ENCODE measurements at regions of chr17 and their contacts with region 1.

Region 1: DNA sequence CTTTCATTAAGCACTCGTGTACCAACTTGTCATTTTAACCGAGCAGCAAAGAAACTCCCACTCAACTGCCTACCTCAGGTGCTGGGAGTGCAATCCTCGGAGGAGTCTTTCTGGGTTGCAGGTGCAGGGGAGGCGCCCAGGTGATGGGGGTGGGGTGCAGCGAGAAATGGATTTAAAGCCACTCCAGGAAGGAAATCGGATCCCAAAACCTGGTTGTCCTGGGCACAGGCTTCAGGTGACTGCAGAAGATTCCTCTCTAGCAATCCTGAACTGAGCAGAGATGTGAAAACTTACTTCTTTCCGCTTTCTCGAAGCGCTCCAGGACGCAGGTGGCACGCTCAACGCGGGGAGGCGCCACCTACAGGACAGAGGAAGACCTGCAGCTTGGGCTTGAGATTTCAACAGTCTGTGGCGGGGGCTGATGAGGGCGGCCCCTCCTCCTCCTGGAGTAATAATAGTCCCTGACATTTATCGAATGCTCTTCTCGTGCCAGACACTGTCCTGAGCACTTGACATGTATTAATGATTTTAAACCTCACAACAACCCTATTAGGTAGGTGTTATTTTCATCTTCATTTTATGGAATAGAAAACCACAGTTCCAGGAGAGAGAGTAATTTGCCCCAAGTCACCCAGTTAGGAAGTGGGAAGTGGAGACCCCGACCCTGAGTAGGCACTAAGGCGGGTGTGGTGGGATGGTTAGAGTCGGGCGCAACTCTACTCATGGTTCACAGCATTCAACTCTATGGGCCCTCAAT is 27.2 kb upstream of the SKAP1 start:
- DNase-seq: peak; percentile 89
- ATAC-seq: peak; percentile 96
- H3K4me3 ChIP-seq: peak overlapping the region in 1 of 5 experiments; percentile 20
- H3K4me3 Mint-ChIP-seq: peak overlapping the region; percentile 17
- H3K27ac ChIP-seq: no peak overlapping the region
- H3K27ac Mint-ChIP-seq: peak overlapping the region; percentile 15
- H3K4me1 ChIP-seq: peaks cover 35 to 41% of the 10 kb centered on the region in 2 donors
- H3K4me1 Mint-ChIP-seq: peaks cover 39% of the 10 kb centered on the region
- H3K27me3 ChIP-seq: peaks cover 0 to 8% (median 0%) of the 10 kb centered on the region in 4 experiments
- H3K27me3 Mint-ChIP-seq: peaks cover 8% of the 10 kb centered on the region
- CTCF ChIP-seq: peak; percentile 98

Region 2: GRCh38 chr17:48335858-48336500 is 121.3 kb before region 1 on chr17:
- CTCF ChIA-PET with region 1: interaction called, 17 read pairs
- POLR2A ChIA-PET with region 1: no interaction called
- intact Hi-C with region 1: loop called (anchors 1 kb)
- DNase-seq: peak; percentile 79
- ATAC-seq: peak; percentile 47
- H3K4me3 ChIP-seq: no peak overlapping the region
- H3K4me3 Mint-ChIP-seq: no peak overlapping the region
- H3K27ac ChIP-seq: no peak overlapping the region
- H3K27ac Mint-ChIP-seq: no peak overlapping the region
- H3K4me1 ChIP-seq: no peaks in the 10 kb centered on the region
- H3K4me1 Mint-ChIP-seq: no peaks in the 10 kb centered on the region
- H3K27me3 ChIP-seq: no peaks in the 10 kb centered on the region
- H3K27me3 Mint-ChIP-seq: peaks cover 4% of the 10 kb centered on the region
- CTCF ChIP-seq: peak; percentile 91

Region 3: DNA sequence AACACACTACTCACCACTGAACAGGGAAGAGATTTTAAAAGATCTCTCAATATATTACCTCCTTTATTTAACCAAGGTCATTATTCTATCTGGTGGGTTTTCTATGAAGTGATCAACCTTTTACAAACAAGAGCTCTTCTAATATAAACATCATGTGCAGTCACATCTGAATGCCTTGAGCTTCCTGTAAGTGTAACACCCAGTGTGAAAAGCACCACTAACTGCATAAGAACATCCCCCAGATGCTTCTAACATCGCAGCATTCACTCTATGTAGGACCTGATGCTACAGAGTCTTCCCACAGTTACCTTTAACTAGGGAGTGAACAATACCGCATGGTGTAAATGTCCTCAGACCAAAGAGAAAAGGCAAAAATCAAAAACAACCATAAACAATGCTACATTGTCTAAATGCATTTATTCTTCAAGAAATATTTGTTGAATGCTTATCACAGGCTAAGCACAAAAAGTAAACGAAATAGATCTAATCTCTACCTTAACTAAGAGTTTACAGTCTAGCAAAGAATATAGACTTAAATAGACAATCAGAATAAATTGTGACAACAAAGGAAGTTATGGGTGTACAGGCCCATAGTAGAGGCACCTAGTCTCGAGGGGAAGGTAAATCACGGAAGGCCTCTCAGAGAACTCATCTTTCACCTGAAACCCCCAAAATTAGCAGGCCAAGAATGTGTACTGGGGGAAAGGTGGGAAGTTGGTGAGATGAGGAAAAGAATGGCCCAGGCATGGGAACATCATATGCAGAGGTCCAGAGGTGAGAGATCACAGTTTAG is 43.4 kb before region 1 on chr17:
- CTCF ChIA-PET with region 1: interaction called, 10 read pairs
- POLR2A ChIA-PET with region 1: no interaction called
- intact Hi-C with region 1: loop called (anchors 5 kb)
- DNase-seq: peak; percentile 62
- ATAC-seq: peak; percentile 82
- H3K4me3 ChIP-seq: peak overlapping the region in 1 of 5 experiments; percentile 3
- H3K4me3 Mint-ChIP-seq: peak overlapping the region; percentile 77
- H3K27ac ChIP-seq: peak overlapping the region; percentile 67 to 75
- H3K27ac Mint-ChIP-seq: peak overlapping the region; percentile 91
- H3K4me1 ChIP-seq: peaks cover 46 to 53% of the 10 kb centered on the region in 2 donors
- H3K4me1 Mint-ChIP-seq: peaks cover 57% of the 10 kb centered on the region
- H3K27me3 ChIP-seq: no peaks in the 10 kb centered on the region
- H3K27me3 Mint-ChIP-seq: peaks cover 4% of the 10 kb centered on the region
- CTCF ChIP-seq: no peak

Region 4: DNA sequence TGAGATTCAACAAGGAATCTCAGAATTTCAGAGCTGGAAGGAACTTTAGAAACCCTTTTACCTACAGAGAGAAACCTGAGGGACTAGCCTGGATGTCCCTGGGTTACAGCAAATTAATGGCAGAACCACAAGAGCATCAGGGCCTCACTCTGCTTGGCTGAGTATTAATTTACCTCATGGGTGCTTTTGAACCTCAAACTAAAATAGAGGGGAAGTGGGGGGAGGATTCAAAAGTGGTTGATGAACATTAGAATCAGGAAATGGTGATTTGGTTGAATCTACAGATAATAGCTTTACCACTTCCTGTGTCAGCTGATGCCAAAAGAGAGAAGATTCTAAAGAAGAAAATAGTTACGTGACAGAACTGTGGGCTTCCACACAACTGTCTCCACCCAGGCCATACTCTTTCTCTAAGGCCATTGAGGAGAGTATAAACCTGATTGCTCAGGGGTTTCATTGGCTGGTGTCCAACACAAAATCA is 16.0 kb before region 1 on chr17:
- CTCF ChIA-PET with region 1: interaction called, 13 read pairs
- POLR2A ChIA-PET with region 1: interaction called, 4 read pairs
- intact Hi-C with region 1: loop called (anchors 1 kb)
- DNase-seq: peak; percentile 85
- ATAC-seq: peak; percentile 75
- H3K4me3 ChIP-seq: peak overlapping the region in 1 of 5 experiments; percentile 42
- H3K4me3 Mint-ChIP-seq: peak overlapping the region; percentile 68
- H3K27ac ChIP-seq: peak overlapping the region; percentile 51 to 52
- H3K27ac Mint-ChIP-seq: peak overlapping the region; percentile 91
- H3K4me1 ChIP-seq: peaks cover 86 to 90% of the 10 kb centered on the region in 2 donors
- H3K4me1 Mint-ChIP-seq: peaks cover 88% of the 10 kb centered on the region
- H3K27me3 ChIP-seq: peaks cover 0 to 26% (median 4%) of the 10 kb centered on the region in 4 experiments
- H3K27me3 Mint-ChIP-seq: peaks cover 19% of the 10 kb centered on the region
- CTCF ChIP-seq: no peak

Region 5: DNA sequence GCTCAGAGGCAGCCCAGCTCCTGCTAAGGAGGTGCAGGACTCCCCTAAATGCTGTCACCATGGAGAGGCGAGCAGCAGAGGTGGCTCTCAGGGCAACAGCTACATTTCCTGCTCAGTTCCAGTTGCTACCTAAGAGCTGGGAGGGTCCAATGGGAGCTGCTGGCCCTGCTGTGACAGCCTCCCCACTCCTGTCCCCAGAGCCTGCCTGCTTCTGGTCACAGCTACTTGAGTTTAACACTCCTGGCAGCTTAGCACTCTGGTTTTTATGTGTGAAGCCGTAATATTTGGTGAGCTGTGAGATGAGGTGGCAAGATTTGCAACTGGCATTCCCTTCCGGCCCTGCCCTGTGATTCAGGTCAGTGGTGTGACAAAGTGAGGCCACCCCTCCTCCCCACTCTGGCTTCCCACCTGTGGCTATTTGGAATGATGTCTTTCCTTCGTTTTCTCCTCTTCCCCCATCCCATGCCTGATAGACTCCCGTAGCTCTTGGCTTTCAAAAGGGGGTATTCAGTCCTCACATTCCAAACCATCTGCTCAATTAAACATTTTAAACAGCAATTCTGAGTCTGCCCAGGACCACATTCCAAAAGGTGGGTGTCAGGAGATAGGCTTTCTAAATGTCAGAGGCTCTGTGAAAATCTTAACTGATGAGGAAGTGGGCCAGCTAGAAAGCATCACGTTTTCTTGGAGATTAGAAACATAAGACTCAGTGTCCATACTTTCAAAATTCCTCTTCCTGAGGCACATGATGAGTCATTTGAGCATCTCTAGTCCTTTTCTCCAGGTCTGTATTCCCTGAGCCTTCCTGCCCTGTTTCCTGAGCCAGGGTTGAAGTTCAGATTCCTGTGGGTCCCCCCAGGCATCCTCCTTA is 15.4 kb after region 1 on chr17:
- CTCF ChIA-PET with region 1: interaction called, 13 read pairs
- POLR2A ChIA-PET with region 1: no interaction called
- intact Hi-C with region 1: no loop called
- DNase-seq: no peak
- ATAC-seq: no peak
- H3K4me3 ChIP-seq: no peak overlapping the region
- H3K4me3 Mint-ChIP-seq: no peak overlapping the region
- H3K27ac ChIP-seq: no peak overlapping the region
- H3K27ac Mint-ChIP-seq: no peak overlapping the region
- H3K4me1 ChIP-seq: no peaks in the 10 kb centered on the region
- H3K4me1 Mint-ChIP-seq: peaks cover 3% of the 10 kb centered on the region
- H3K27me3 ChIP-seq: peaks cover 0 to 4% (median 1%) of the 10 kb centered on the region in 4 experiments
- H3K27me3 Mint-ChIP-seq: peaks cover 19% of the 10 kb centered on the region
- CTCF ChIP-seq: no peak

Region 6: DNA sequence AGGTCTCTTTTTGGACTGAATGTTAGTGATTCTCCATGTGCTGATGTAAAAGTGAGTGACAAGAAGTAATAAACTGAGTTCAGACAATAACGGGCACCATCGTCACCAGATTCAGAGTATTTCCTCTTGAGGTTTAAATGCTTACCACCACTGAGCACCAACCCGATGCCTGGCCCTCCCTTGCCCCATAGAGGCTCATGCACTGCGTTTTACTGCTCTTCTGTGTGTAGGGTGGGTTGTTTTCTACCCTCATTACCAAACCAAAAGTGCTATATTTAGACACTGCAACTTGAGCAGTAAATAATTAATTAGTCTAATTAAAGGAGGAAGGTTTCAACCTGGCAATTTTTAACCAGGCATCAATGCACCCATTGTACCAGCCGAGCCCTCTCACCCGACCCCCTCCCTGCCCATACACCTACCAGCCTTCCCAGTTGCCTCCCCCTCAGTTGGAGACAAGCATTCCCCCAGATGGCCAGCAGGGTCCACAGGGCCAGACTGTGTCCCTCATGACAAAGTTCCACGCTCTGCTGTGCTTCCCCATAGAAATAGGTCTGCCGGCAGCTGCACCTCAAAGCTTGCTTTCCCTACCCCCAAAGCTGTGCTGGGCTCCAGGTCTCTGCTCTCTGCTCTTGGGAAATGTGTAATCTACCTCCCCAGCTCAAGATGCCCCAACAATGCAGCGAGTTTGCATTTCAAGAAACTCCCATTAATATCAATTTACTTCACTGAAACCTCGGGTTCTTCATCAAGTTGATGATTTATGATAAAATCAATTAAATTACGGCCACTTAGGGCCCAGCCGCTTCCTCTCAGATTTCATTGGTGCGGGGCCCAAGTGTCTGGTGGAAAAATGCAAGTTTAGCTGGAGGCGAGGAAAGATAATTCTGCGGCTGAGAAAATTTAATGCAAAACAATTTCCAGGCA is 104.9 kb after region 1 on chr17:
- CTCF ChIA-PET with region 1: no interaction called
- POLR2A ChIA-PET with region 1: no interaction called
- intact Hi-C with region 1: no loop called
- DNase-seq: no peak
- ATAC-seq: no peak
- H3K4me3 ChIP-seq: no peak overlapping the region
- H3K4me3 Mint-ChIP-seq: no peak overlapping the region
- H3K27ac ChIP-seq: no peak overlapping the region
- H3K27ac Mint-ChIP-seq: no peak overlapping the region
- H3K4me1 ChIP-seq: no peaks in the 10 kb centered on the region
- H3K4me1 Mint-ChIP-seq: peaks cover 3% of the 10 kb centered on the region
- H3K27me3 ChIP-seq: peaks cover 0 to 43% (median 8%) of the 10 kb centered on the region in 4 experiments
- H3K27me3 Mint-ChIP-seq: peaks cover 21% of the 10 kb centered on the region
- CTCF ChIP-seq: no peak

Region 7: DNA sequence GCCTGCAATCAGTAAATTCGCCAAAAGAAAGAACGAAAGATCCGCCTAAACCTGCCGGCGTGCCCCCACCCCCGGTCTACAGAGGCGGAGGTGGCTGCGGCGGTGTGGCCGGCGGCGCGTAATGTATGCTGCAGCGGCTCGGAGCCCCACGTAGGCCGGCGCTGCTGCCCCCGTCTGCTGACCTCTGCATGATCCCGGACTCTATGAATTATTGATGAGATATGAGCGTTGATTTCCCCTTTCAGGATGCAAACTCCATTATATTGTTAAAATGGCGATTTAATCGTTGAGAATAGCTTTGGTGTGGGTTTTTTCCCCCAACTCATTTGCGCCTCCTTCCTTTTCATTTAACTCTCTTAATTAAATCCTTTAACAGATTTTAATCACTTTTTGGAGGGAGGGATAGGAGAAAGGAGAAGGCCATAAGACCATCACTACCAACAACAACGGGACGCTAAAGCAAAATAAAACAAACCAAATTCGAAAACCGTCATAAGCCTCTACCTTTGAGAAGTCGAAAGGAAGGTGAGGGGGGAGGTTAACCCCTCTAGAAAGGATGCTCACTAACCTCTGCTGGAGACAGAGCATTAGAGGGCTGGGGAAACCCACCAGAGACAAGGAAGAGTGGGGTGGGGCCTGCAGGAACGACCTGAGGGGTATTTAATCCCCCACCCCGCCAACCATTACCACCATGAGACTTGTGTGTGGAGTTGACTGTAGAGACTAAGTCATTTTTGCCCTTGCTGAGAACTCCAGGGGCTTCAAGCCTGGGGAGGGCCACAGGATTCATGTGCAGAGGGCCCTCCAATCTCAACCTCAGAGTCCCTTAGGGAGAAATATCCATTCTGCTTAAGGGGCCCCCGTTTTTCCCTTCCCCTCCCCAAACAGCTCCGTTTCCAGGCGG is 129.3 kb after region 1 on chr17:
- CTCF ChIA-PET with region 1: interaction called, 10 read pairs
- POLR2A ChIA-PET with region 1: no interaction called
- intact Hi-C with region 1: no loop called
- DNase-seq: peak; percentile 61
- ATAC-seq: no peak
- H3K4me3 ChIP-seq: peak overlapping the region in 3 of 5 experiments; percentile 59 to 64 (median 59)
- H3K4me3 Mint-ChIP-seq: peak overlapping the region; percentile 97
- H3K27ac ChIP-seq: no peak overlapping the region
- H3K27ac Mint-ChIP-seq: no peak overlapping the region
- H3K4me1 ChIP-seq: peaks cover 43 to 57% of the 10 kb centered on the region in 2 donors
- H3K4me1 Mint-ChIP-seq: peaks cover 39% of the 10 kb centered on the region
- H3K27me3 ChIP-seq: peaks cover 0 to 99% (median 89%) of the 10 kb centered on the region in 4 experiments
- H3K27me3 Mint-ChIP-seq: peaks cover 93% of the 10 kb centered on the region
- CTCF ChIP-seq: no peak

Measured in B cell (primary cell).